ENCODE measurements at regions of chr22 and their contacts with region 1.

Region 1: DNA sequence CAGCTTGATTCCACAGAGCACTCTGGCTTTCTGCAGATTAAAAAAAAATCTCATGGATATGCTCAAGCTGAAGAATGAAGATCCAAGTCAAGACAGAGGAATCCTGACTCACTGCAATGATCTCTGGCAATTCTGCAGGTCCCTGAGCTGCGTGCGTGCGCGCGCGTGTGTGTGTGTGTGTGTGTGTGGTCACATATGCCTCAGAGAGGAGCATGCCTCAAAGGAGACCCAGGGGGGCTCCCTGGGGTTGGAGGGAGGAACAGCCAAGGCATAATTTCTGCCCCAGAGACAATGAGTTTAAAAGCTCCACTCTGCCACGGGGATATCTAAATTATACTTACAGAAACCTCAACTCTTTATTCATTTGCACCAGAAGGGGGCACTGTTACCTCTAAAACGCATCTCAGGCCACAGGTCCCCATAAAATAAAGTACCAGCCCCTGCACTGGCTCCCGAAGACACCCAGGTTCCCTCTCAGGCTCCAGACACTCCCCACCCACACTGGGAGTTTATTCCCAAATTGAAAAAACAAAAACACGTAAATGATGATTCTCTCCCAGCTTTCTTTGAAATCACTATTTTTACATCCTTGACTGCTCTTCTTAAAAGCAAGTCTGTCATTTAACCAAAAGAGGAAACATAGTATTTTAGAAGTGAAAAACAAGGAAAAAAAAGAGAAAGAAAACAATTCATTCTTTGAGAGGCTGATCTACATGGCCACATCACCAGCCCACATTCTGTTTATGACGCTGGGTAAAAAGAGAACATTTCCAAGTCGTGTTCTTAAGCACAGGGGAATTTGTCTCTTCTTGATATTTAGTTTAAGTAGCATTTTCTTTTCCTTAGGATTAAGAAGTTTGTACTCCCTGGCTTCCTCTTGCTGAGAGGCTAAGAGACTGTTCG is 401.0 kb downstream of the LARGE1 start:
- DNase-seq: no peak
- H3K4me3 ChIP-seq: no peak overlapping the region
- H3K27ac ChIP-seq: peak overlapping the region; percentile 27
- H3K4me1 ChIP-seq: peaks cover 45% of the 10 kb centered on the region
- H3K27me3 ChIP-seq: no peaks in the 10 kb centered on the region
- CTCF ChIP-seq: peak; percentile 72

Region 2: GRCh38 chr22:32882774-32883530 is 636.4 kb before region 1 on chr22:
- intact Hi-C with region 1: no loop called
- DNase-seq: no peak
- H3K4me3 ChIP-seq: no peak overlapping the region
- H3K27ac ChIP-seq: no peak overlapping the region
- H3K4me1 ChIP-seq: peaks cover 44% of the 10 kb centered on the region
- H3K27me3 ChIP-seq: no peaks in the 10 kb centered on the region
- CTCF ChIP-seq: no peak

Region 3: DNA sequence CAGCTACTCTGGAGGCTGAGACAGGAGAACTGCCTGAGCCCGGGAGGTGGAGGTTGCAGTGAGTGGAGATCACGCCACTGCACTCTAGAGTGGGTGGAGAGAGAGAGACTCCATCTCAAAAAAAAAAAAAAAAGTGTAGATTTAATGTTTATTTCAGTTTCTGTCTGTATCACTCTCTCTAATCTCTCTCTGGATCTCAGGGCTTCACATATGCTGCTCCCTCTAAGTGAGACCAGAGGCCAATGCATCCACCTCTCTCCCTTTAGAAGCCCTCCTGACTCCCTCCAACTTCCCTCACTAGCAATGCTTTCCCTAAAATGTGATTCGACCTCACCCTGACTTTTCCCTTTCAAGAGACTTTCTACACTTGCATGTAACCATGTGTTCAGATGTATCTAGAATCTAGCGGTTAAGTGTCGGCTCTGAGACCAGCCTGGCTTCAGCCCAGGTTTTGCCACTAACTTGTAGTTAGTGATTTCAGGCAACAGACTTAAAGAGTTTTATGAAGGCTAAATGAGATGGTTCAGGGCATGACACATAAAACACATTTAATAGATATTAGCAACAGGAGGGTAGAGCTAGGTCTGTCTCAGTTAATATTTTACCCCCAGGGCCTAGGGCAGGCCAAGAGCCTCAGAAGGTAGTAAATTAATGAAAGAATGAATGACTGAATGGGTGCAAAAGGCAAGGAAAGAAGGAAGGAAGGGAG is 36.6 kb after region 1 on chr22:
- intact Hi-C with region 1: no loop called
- DNase-seq: no peak
- H3K4me3 ChIP-seq: no peak overlapping the region
- H3K27ac ChIP-seq: no peak overlapping the region
- H3K4me1 ChIP-seq: peaks cover 5% of the 10 kb centered on the region
- H3K27me3 ChIP-seq: no peaks in the 10 kb centered on the region
- CTCF ChIP-seq: no peak

Region 4: GRCh38 chr22:33579448-33580093 is 60.2 kb after region 1 on chr22:
- intact Hi-C with region 1: loop called (anchors 2 kb)
- DNase-seq: peak; percentile 41
- H3K4me3 ChIP-seq: no peak overlapping the region
- H3K27ac ChIP-seq: no peak overlapping the region
- H3K4me1 ChIP-seq: peaks cover 42% of the 10 kb centered on the region
- H3K27me3 ChIP-seq: no peaks in the 10 kb centered on the region
- CTCF ChIP-seq: peak; percentile 95